Psoas muscle (tissue), 8 donors: ENCODE measurements at regions of chr5 and their contacts with region 1.

Region 1: GRCh38 chr5:81292130-81292529 is 9.3 kb upstream of the ZCCHC9 start:
- DNase-seq: no peak
- ATAC-seq: no peak
- H3K4me3 ChIP-seq: no peak overlapping the region
- H3K27ac ChIP-seq: no peak overlapping the region
- H3K4me1 ChIP-seq: no peaks in the 10 kb centered on the region
- H3K27me3 ChIP-seq: no peaks in the 10 kb centered on the region
- CTCF ChIP-seq: no peak

Region 2: DNA sequence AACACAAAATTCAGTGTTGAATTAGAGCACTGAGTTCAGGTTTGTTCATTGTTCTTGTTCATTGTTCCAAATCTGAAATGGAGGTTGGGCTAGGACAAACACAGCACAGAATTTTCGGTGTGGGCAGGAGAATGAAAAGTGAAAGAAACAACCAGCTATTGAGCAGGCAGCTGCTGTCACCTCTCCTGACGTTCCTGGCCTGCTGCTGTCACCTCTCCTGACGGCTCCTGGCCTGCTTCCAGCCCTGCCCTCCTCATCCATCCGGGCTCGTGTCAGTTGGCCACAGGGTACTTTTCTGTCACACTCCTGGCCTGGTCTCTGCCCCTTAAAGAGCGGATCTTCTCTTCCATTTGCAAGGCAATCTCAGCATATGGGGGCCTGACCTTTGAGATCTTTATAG is 104.2 kb before region 1 on chr5:
- intact Hi-C with region 1: no loop called
- DNase-seq: peak in 1 of 2 donors; percentile 30
- ATAC-seq: peak in 1 of 4 donors; percentile 63
- H3K4me3 ChIP-seq: no peak overlapping the region
- H3K27ac ChIP-seq: no peak overlapping the region
- H3K4me1 ChIP-seq: no peaks in the 10 kb centered on the region
- H3K27me3 ChIP-seq: peaks cover 0 to 2% (median 0%) of the 10 kb centered on the region in 3 donors
- CTCF ChIP-seq: no peak

Region 3: GRCh38 chr5:81247441-81247972 is 44.6 kb before region 1 on chr5:
- intact Hi-C with region 1: loop called in 1 of 2 experiments (anchors 5 kb)
- DNase-seq: no peak
- ATAC-seq: no peak
- H3K4me3 ChIP-seq: no peak overlapping the region
- H3K27ac ChIP-seq: peak overlapping the region; percentile 98
- H3K4me1 ChIP-seq: peaks cover 86% of the 10 kb centered on the region
- H3K27me3 ChIP-seq: no peaks in the 10 kb centered on the region
- CTCF ChIP-seq: no peak

Region 4: DNA sequence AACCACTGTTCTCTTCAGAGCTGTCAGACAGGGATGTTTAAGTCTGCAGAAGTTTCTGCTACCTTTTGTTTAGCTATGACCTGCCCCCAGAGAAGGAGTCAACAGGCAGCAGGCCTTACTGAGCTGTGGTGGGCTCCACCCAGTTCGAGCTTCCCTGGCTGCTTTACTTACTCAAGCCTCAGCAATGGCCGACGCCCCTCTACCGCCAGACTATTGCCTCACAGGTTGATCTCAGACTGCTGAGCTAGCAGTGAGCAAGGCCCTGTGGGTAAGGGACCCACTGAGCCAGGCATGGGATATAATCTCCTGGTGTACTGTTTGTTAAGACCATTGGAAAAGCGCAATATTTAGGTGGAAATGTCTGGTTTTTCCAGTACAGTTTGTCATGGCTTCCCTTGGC is 1555.4 kb after region 1 on chr5:
- intact Hi-C with region 1: no loop called
- DNase-seq: peak in 1 of 2 donors; percentile 44
- ATAC-seq: no peak
- H3K4me3 ChIP-seq: no peak overlapping the region
- H3K27ac ChIP-seq: no peak overlapping the region
- H3K4me1 ChIP-seq: no peaks in the 10 kb centered on the region
- H3K27me3 ChIP-seq: no peaks in the 10 kb centered on the region
- CTCF ChIP-seq: no peak